Calu3 (cell line): ENCODE measurements at regions of chr3 and their contacts with region 1.

Region 1: GRCh38 chr3:94862703-94863102 is 799.8 kb downstream of the NSUN3 start:
- DNase-seq: peak; percentile 17
- H3K4me3 Mint-ChIP-seq: no peak overlapping the region
- H3K27ac Mint-ChIP-seq: no peak overlapping the region
- H3K4me1 Mint-ChIP-seq: no peaks in the 10 kb centered on the region
- H3K27me3 Mint-ChIP-seq: no peaks in the 10 kb centered on the region
- CTCF ChIP-seq: peak; percentile 56

Region 2: DNA sequence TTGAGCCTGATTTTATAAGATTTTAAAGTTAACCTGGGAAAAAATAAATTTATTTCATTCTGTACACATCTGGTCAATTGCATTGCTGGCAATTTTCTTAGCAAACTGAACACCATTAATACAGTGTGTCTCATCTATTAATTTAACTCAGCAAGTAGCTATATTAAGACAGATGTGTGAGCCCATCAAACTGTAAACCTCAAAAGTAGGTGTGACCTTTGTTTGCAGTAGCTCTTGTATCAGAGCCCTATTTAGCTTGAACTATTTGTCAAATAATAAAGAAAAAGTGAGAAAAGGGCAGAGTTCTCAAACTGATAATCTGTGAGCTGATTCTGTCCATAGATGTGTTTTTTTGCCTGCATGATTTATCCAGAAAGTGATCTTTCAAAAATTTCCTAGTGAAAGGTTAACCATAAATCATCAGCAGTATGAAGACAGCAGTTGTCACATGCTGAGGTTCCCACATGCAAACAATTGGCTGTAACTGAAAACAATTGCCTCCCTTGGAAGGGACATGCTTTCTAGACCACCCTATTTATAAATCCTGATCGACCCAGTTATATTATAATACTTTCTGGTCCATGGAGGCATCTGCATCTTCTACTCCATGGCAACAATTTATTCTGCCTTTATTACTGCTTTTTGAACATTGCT is 153.3 kb before region 1 on chr3:
- CTCF ChIA-PET with region 1: no interaction called
- intact Hi-C with region 1: no loop called
- DNase-seq: no peak
- H3K4me3 Mint-ChIP-seq: no peak overlapping the region
- H3K27ac Mint-ChIP-seq: no peak overlapping the region
- H3K4me1 Mint-ChIP-seq: no peaks in the 10 kb centered on the region
- H3K27me3 Mint-ChIP-seq: no peaks in the 10 kb centered on the region
- CTCF ChIP-seq: no peak

Region 3: DNA sequence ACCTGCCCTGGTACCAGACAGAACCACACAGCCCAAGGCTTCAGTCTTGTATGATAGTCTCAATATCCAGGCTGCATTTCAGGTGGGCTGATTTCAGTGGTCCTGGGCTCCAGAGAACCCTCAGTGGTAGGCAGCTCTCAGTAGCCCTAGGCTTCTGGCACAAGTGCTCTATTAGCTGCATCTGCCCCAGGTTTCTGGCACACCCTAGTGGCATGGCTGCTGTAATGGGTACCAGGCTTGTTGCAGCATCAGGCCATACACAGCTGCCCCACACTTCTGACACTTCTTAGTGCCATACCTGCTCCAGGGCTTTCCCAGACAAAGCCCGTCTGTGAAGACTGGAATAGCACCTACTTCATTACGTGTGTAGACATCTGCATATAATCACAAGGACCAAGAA is 889.5 kb after region 1 on chr3:
- CTCF ChIA-PET with region 1: interaction called, 5 read pairs
- intact Hi-C with region 1: loop called (anchors 1 kb)
- DNase-seq: peak; percentile 37
- H3K4me3 Mint-ChIP-seq: no peak overlapping the region
- H3K27ac Mint-ChIP-seq: no peak overlapping the region
- H3K4me1 Mint-ChIP-seq: no peaks in the 10 kb centered on the region
- H3K27me3 Mint-ChIP-seq: no peaks in the 10 kb centered on the region
- CTCF ChIP-seq: no peak

Region 4: GRCh38 chr3:96012939-96013338 is 1150.2 kb after region 1 on chr3:
- CTCF ChIA-PET with region 1: no interaction called
- intact Hi-C with region 1: loop called (anchors 10 kb)
- DNase-seq: no peak
- H3K4me3 Mint-ChIP-seq: no peak overlapping the region
- H3K27ac Mint-ChIP-seq: no peak overlapping the region
- H3K4me1 Mint-ChIP-seq: no peaks in the 10 kb centered on the region
- H3K27me3 Mint-ChIP-seq: no peaks in the 10 kb centered on the region
- CTCF ChIP-seq: no peak

Region 5: DNA sequence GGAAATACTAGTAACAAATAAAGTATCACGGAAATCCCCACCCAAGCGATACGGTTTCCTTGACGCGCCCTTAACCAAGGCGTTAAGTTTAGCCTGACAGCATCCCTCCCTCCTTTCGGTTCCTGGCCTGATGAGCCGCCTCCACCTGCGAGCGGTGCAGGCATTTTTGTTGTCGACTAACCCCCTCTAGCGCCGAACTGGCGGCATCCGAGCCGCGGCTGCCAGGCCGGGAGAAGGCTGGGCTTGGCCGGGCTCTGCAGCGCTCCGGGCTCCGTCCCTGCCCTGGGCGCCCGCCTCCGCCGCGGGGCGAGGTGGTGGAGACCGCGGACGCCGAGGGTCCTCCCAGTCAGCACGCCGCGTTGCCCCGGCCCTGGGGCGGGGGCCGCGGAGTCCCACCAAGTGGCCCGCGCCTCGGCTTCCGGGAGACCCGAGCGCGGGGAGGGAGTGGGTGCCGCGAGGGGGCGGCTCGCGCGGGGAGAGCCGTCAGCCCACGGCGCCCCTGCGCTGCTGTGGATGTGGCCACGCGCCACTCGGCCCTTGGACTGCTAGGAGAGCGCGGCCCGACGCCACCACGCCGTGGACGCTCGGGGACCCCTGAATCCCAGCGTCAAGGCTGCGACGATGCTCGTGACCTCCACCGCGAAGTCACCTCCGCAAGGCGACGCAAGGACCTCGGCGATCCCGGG is 1950.6 kb after region 1 on chr3:
- CTCF ChIA-PET with region 1: no interaction called
- intact Hi-C with region 1: loop called (anchors 5 kb)
- DNase-seq: peak; percentile 88
- H3K4me3 Mint-ChIP-seq: peak overlapping the region; percentile 89
- H3K27ac Mint-ChIP-seq: no peak overlapping the region
- H3K4me1 Mint-ChIP-seq: peaks cover 8% of the 10 kb centered on the region
- H3K27me3 Mint-ChIP-seq: no peaks in the 10 kb centered on the region
- CTCF ChIP-seq: peak; percentile 45